ENCODE measurements at regions of chr9 and their contacts with region 1.

Region 1: GRCh38 chr9:109320742-109321448 is at the start of gene EPB41L4B:
- DNase-seq: peak; percentile 83
- ATAC-seq: peak; percentile 88
- H3K4me3 ChIP-seq: peak within 1 kb of the TSS; percentile 85 to 91 (median 90)
- H3K27ac ChIP-seq: peak within 1 kb of the TSS; percentile 52
- H3K4me1 ChIP-seq: peaks cover 44% of the 10 kb centered on the region
- H3K27me3 ChIP-seq: no peaks in the 10 kb centered on the region; a peak in 2 of 5 replicates
- CTCF ChIP-seq: peak; percentile 98
- EP300 ChIP-seq: peak in 1 of 2 experiments; percentile 53; a peak in 1 of 4 replicates
- POLR2A ChIP-seq: no peak
- RAD21 ChIP-seq: peak; percentile 100
- total RNA-seq, gene EPB41L4B: 22.1 and 25.7 TPM in 2 replicates

Region 2: GRCh38 chr9:109119439-109120203 is 201.3 kb before region 1 on chr9 and contains the start of gene TMEM245:
- CTCF ChIA-PET with region 1: no interaction called
- POLR2A ChIA-PET with region 1: no interaction called
- in situ Hi-C with region 1: no loop called
- intact Hi-C with region 1: loop called (anchors 10 kb)
- DNase-seq: peak; percentile 98
- ATAC-seq: peak; percentile 90
- H3K4me3 ChIP-seq: peak within 1 kb of the TSS; percentile 91 to 96 (median 95)
- H3K27ac ChIP-seq: peak within 1 kb of the TSS; percentile 77
- H3K4me1 ChIP-seq: peaks cover 81% of the 10 kb centered on the region
- H3K27me3 ChIP-seq: no peaks in the 10 kb centered on the region
- CTCF ChIP-seq: peak; percentile 0; the same call in 1 of the 2 replicates
- EP300 ChIP-seq: 0 out of 4 replicates have a peak, but pooled peaks of 1 of the 2 experiments have one; percentile 11
- POLR2A ChIP-seq: peak; percentile 66 to 74
- RAD21 ChIP-seq: 0 out of 2 replicates have a peak, but pooled peaks have one; percentile 22
- total RNA-seq, gene TMEM245: 39.7 and 55.4 TPM in 2 replicates

Region 3: GRCh38 chr9:109192732-109193361 is 128.0 kb before region 1 on chr9:
- CTCF ChIA-PET with region 1: interaction called, 13 read pairs
- POLR2A ChIA-PET with region 1: no interaction called
- in situ Hi-C with region 1: loop called (anchors 5 kb)
- intact Hi-C with region 1: no loop called
- DNase-seq: peak; percentile 49
- ATAC-seq: peak; percentile 92
- H3K4me3 ChIP-seq: no peak overlapping the region
- H3K27ac ChIP-seq: no peak overlapping the region
- H3K4me1 ChIP-seq: 0 out of 2 replicates have a peak, but pooled peaks cover 9% of the 10 kb centered on the region
- H3K27me3 ChIP-seq: peaks cover 0 to 1% of the 10 kb centered on the region in 2 experiments; a peak in 1 of 5 replicates
- CTCF ChIP-seq: peak; percentile 80
- EP300 ChIP-seq: no peak
- POLR2A ChIP-seq: no peak
- RAD21 ChIP-seq: peak; percentile 80

Region 4: DNA sequence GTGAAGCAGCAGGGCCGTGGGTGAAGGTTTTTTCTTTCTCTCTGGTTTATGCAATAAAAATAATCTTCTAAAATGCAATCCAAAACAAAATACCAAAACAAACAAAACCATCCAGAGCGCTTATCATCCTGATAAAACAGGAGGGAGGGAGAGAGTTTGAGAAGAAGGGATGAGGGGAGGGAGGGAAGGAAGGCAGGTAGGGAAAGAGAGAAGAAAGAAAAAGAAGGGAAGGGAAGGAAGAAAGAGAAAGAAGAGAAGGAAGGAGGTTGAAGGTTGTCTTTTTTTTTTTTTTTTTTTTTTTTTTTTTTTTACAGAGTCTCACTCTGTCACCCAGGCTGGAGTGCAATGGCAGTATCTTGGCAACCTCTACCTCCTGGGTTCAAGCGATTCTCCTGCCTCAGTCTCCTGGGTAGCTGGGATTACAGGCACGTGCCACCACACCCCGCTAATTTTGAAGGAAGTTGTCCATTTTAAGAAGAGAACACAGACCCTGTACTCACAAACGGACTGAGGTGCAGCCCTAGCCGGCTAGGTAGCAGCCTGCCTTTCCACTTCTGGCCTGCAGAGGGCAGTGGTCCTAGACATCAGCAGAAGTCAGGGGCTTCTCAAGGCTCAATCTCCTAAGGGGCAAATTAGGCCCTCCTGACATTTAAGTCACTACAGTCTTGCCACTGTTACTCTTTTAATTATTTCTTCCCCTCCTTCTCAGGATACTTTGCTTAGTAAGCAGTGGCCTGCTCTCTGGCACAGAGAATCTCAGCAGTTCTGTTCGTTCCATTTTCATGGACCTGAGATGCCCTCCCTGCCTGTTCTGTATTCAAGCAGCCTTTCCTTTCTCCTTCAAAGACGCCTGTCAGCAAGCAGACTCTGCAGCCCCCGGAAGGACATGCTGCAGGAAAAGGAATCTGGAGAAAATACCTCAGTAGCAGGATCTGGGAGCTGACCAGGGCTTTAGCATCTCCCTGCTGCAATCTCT is 76.5 kb before region 1 on chr9:
- CTCF ChIA-PET with region 1: interaction called, 22 read pairs
- POLR2A ChIA-PET with region 1: interaction called, 3 read pairs
- in situ Hi-C with region 1: loop called (anchors 5 kb)
- intact Hi-C with region 1: loop called (anchors 1 kb)
- DNase-seq: peak; percentile 63
- ATAC-seq: peak; percentile 82
- H3K4me3 ChIP-seq: no peak overlapping the region
- H3K27ac ChIP-seq: no peak overlapping the region
- H3K4me1 ChIP-seq: peaks cover 16% of the 10 kb centered on the region
- H3K27me3 ChIP-seq: no peaks in the 10 kb centered on the region
- CTCF ChIP-seq: peak; percentile 90
- EP300 ChIP-seq: no peak
- POLR2A ChIP-seq: no peak
- RAD21 ChIP-seq: peak; percentile 73

Region 5: DNA sequence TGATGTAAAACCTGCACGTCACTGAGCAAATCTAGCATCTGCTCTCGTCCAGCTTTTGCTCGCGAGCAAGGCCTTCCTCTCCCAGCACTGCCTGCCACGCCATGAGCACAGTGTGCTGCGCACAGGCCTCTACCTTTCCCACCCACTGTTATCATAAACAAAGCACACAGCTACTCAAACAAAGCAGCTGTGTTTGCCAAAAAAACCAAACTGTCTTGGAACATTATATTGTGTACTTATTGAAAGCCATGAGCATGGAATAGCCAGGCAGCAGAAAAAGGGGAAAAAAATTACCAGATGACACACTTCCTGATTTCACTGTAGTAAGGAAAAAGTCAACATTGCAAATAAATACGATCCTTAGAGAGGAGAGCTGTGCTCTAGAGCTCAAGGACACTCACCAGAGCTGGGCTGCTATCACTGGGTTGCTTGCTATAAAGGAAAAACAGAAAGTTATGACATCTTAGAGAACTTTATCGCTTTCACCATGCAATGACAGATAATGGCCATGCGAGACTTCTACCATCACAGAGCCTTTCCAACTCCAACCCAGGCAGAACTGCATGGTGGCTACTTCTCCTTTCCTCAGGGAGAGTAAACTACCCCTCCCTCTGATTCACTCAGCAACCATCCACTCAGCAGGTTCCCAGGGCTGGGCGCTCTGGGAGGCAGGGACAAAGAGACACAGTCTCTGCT is 69.7 kb before region 1 on chr9:
- CTCF ChIA-PET with region 1: interaction called, 19 read pairs
- POLR2A ChIA-PET with region 1: interaction called, 14 read pairs
- in situ Hi-C with region 1: loop called (anchors 5 kb)
- intact Hi-C with region 1: loop called (anchors 1 kb)
- DNase-seq: peak; percentile 97
- ATAC-seq: peak; percentile 89
- H3K4me3 ChIP-seq: peak overlapping the region in 2 of 3 experiments; percentile 15 to 42; a peak in 3 of 6 replicates
- H3K27ac ChIP-seq: peak overlapping the region; percentile 90
- H3K4me1 ChIP-seq: peaks cover 62% of the 10 kb centered on the region
- H3K27me3 ChIP-seq: no peaks in the 10 kb centered on the region
- CTCF ChIP-seq: no peak
- EP300 ChIP-seq: peak in 1 of 2 experiments; percentile 81; a peak in 2 of 4 replicates
- POLR2A ChIP-seq: no peak
- RAD21 ChIP-seq: 0 out of 2 replicates have a peak, but pooled peaks have one; percentile 17

Region 6: DNA sequence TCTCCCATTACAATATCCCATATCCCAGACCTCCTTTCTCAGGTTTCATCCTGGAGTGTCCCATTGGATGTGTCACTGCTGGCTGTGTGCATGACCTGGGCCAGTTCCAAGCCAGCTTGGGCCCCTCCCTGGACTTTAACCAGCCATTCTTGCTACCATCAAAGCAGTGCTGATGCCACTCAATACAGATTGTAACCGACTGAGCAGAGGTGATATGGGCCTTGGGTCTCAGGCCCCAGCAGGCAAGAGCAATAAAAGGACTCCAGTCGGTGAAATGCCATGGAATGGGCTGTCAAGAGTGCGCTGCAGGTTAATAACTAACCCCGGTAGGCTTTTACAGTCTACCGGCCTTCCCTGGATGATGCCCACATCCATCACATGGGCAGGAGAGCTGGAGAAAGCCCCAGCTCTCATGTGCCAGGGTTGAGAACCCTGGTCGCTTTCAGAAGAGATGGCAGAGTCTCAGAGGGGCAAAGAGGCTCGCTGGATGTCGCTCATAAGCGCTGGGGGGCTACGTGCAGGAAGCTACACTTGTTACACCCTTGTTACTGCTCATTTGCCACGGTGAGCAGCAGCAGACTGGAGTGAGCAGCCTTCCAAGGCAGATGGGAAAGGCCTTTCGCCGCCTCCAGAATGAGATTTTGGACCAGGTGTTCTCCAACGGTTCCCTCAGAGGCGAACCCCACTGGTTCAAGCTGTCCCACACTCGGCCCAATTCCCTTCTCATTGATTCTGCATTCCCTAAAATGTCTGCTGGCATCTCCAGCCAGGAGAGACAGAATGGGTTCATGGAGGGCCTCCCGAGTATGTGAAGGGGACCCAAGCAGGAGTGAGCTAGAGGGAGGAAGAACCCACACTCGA is 13.3 kb before region 1 on chr9:
- CTCF ChIA-PET with region 1: no interaction called
- POLR2A ChIA-PET with region 1: interaction called, 6 read pairs
- in situ Hi-C with region 1: no loop called
- intact Hi-C with region 1: loop called (anchors 1 kb)
- DNase-seq: peak; percentile 94
- ATAC-seq: peak; percentile 99
- H3K4me3 ChIP-seq: peak overlapping the region in 2 of 3 experiments; percentile 23 to 60; a peak in 3 of 6 replicates
- H3K27ac ChIP-seq: peak overlapping the region; percentile 76
- H3K4me1 ChIP-seq: peaks cover 84% of the 10 kb centered on the region
- H3K27me3 ChIP-seq: no peaks in the 10 kb centered on the region
- CTCF ChIP-seq: no peak
- EP300 ChIP-seq: peak in 1 of 2 experiments; percentile 81; a peak in 2 of 4 replicates
- POLR2A ChIP-seq: peak in 1 of 2 experiments; percentile 62; a peak in 2 of 4 replicates
- RAD21 ChIP-seq: 0 out of 2 replicates have a peak, but pooled peaks have one; percentile 29

Region 7: DNA sequence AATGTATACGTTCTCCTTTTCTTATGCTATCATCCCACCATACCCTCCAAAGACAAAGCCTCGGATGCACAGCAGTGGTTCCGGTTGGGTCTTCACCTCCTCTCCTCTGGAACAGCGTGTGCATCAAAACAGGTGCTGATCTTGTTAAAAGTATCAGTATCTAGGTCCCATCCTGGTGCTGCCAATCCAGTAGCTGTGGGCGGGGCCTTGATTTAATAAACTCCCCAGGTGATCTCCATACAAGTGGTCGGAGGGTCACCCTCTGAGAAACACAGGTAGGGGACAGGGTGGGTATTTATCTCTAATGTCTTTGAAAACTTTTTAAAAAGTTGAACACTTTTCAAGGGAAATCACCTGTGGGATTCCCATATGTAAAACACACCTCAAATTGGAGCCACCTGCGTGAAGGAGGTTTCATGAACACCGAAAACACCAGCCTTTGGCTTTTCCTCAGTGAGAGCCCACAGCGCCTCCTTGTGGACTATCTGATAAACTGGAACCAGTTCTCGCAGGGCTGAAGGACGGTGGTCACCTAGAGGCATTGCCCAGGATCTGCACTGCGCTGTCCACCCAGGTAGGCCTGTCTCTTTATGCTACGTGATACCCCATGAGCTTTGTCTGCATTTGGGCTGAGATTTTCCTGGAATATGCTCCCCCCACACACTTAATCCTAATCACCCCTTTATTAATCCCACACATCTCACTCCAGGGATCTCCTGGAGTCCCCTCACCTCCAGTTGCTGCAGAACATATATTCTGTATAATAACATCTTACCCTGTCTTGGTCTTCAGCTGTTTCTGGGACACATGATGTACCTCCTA is 80.5 kb after region 1 on chr9:
- CTCF ChIA-PET with region 1: no interaction called
- POLR2A ChIA-PET with region 1: no interaction called
- in situ Hi-C with region 1: no loop called
- intact Hi-C with region 1: loop called (anchors 2 kb)
- DNase-seq: peak; percentile 65
- ATAC-seq: peak; percentile 100
- H3K4me3 ChIP-seq: no peak overlapping the region
- H3K27ac ChIP-seq: no peak overlapping the region
- H3K4me1 ChIP-seq: no peaks in the 10 kb centered on the region
- H3K27me3 ChIP-seq: no peaks in the 10 kb centered on the region
- CTCF ChIP-seq: peak; percentile 86
- EP300 ChIP-seq: no peak
- POLR2A ChIP-seq: no peak
- RAD21 ChIP-seq: peak; percentile 70

Measured in HepG2 (cell line).